ENCODE measurements at regions of chr6 and their contacts with region 1.

Region 1: DNA sequence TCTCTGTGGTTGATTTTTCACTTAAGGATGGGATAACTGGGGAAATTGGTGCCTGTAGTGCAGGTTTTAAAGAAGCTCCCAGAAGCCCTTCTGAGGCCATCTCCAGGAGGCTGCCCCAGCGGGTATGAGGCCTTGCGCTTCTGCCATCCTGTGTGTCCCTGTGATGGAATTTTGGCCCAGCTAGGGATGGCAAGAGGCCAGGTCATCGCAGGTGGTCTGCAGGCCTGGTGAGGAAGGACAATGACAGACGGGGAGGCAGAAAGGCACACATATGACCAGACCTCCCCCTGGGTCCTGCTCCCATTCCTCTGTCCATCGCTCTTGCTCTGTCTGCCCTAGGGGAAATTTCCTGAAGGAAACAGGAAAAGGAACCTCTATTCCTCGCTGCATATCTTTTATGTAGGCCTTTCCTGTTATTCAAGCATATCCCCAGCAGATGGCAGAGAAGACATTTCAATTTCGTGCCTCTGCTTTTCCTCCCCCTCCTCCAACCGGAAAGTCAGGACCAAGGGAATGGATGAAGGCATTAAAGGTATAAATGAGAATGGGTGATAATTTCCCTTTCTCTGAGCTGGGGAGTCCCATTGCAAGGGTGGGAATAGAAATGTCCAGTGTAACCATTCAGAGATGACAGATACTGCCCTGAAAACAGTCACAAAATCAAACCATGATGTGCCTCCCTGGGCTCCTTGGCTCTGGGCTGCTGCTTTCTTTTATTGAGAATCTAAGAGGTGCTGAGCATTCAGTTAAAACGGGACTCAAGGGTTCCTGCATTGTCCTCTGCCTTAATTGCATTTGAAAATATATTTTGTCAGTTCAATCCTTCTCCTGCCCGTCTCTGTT is 17.6 kb upstream of the HLA-F start:
- DNase-seq: peak in 1 of 2 donors; percentile 52
- ATAC-seq: peak in 5 of 8 donors; percentile 40 to 71 (median 67)
- H3K4me3 ChIP-seq: no peak overlapping the region
- H3K27ac ChIP-seq: no peak overlapping the region
- H3K4me1 ChIP-seq: peaks cover 0 to 16% (median 0%) of the 10 kb centered on the region in 9 donors
- H3K27me3 ChIP-seq: peaks cover 0 to 45% (median 16%) of the 10 kb centered on the region in 7 donors
- CTCF ChIP-seq: peak in 8 of 9 donors; percentile 29 to 78 (median 66)

Region 2: DNA sequence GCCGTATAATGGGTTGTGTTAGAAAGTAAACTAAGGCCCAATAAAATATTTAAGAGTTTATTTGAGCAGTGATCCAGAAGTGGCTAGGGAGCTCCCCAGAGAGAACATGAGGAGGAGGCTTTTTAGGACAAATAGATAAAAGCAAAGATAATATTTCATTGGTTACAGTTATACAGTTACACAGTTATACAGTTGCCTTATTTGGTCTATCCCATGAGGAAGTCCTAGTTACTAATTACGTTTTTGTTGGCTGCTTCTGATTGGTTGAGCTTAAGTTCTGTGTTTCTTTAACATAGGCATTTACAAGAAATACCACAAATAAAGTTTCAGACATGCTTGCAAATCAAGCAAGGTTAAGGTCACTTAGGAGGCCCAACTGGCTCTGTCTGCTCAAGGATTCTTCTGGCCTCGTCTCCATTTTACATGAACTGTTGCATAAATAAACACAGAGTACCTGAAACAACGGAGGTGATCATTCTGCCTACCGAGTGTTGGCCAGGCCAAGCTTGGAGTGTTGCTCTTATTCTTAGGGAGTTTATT is 153.0 kb before region 1 on chr6:
- intact Hi-C with region 1: no loop called
- DNase-seq: peak in 1 of 2 donors; percentile 41
- ATAC-seq: peak in 7 of 8 donors; percentile 57 to 88 (median 76)
- H3K4me3 ChIP-seq: peak overlapping the region in 8 of 10 donors; percentile 23 to 51 (median 48)
- H3K27ac ChIP-seq: no peak overlapping the region
- H3K4me1 ChIP-seq: peaks cover 5 to 20% (median 14%) of the 10 kb centered on the region in 9 donors
- H3K27me3 ChIP-seq: peaks cover 0 to 62% (median 46%) of the 10 kb centered on the region in 7 donors
- CTCF ChIP-seq: no peak

Region 3: GRCh38 chr6:29752451-29753308 is 47.1 kb after region 1 on chr6:
- intact Hi-C with region 1: loop called in 7 of 10 experiments (anchors 1 to 10 kb)
- DNase-seq: peak; percentile 89 to 90
- ATAC-seq: peak; percentile 84 to 91 (median 86)
- H3K4me3 ChIP-seq: peak overlapping the region; percentile 37 to 82 (median 73)
- H3K27ac ChIP-seq: peak overlapping the region; percentile 75 to 98 (median 96)
- H3K4me1 ChIP-seq: peaks cover 9 to 36% (median 32%) of the 10 kb centered on the region in 9 donors
- H3K27me3 ChIP-seq: no peaks in the 10 kb centered on the region
- CTCF ChIP-seq: peak; percentile 87 to 99 (median 93)

Region 4: GRCh38 chr6:29834564-29835436 is 129.2 kb after region 1 on chr6:
- intact Hi-C with region 1: loop called (anchors 1 to 5 kb)
- DNase-seq: peak in 1 of 2 donors; percentile 40
- ATAC-seq: peak in 5 of 8 donors; percentile 46 to 69 (median 52)
- H3K4me3 ChIP-seq: no peak overlapping the region
- H3K27ac ChIP-seq: no peak overlapping the region
- H3K4me1 ChIP-seq: no peaks in the 10 kb centered on the region
- H3K27me3 ChIP-seq: peaks cover 0 to 89% (median 59%) of the 10 kb centered on the region in 7 donors
- CTCF ChIP-seq: peak; percentile 73 to 96 (median 90)

Region 5: GRCh38 chr6:30013291-30013922 is 307.8 kb after region 1 on chr6:
- intact Hi-C with region 1: loop called in 1 of 10 experiments (anchors 10 kb)
- DNase-seq: peak; percentile 42 to 69
- ATAC-seq: peak in 7 of 8 donors; percentile 65 to 83 (median 71)
- H3K4me3 ChIP-seq: no peak overlapping the region
- H3K27ac ChIP-seq: no peak overlapping the region
- H3K4me1 ChIP-seq: no peaks in the 10 kb centered on the region
- H3K27me3 ChIP-seq: peaks cover 0 to 10% (median 0%) of the 10 kb centered on the region in 7 donors
- CTCF ChIP-seq: peak; percentile 76 to 98 (median 91)

Region 6: GRCh38 chr6:30742316-30743098 is 1036.9 kb after region 1 on chr6 and contains the start of gene FLOT1:
- intact Hi-C with region 1: no loop called
- DNase-seq: peak; percentile 96 to 98
- ATAC-seq: peak; percentile 83 to 94 (median 90)
- H3K4me3 ChIP-seq: peak within 1 kb of the TSS; percentile 63 to 95 (median 82)
- H3K27ac ChIP-seq: peak within 1 kb of the TSS; percentile 91 to 100 (median 96)
- H3K4me1 ChIP-seq: peaks cover 11 to 63% (median 52%) of the 10 kb centered on the region in 9 donors
- H3K27me3 ChIP-seq: no peaks in the 10 kb centered on the region
- CTCF ChIP-seq: peak in 1 of 9 donors; percentile 18
- total RNA-seq, gene FLOT1: 158 to 280 (median 184) TPM

Measured in heart right ventricle (tissue), 16 donors.